Right cardiac atrium (tissue), 5 donors: ENCODE measurements at regions of chr5 and their contacts with region 1.

Region 1: DNA sequence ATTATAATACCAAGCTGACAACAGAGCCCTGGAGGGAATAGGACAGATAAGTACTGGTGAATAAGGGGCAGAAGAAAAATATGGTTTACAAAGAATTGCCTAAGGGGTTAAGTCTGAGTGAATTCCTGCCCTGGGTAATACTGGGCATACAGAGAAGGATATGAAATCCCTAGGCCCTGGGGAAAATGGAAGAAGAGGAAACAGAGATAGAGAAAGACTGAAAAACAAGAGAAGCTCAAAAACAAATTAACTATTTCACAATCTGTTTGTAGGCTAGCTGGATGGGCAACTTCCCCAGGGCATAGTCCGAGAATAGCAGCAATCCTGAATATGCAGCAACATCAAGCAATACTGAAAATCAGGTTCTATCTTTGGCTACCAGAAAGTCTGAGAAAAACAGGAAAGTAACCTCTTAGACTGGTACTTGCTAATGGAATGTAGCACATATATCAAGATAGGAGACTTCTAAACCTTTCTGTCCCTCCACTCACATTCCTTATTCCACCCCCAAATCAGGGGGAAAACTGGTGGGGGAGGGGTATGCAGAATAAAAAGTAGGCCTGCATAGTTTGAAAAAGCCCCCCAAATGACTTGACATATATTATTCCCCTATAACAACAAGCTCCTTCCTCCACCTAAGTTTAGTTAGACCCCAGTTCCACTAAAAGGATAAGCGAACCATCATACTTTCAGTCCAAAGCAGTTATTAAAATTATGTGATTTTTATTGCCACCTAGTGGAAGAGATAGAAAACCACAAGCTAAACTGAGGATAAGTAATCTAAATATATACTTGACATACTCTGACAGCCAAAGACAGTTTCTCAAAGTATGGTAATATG is 20.6 kb downstream of the SLC38A9 start:
- DNase-seq: no peak
- ATAC-seq: peak; percentile 70 to 81
- H3K4me3 ChIP-seq: peak overlapping the region; percentile 45
- H3K27ac ChIP-seq: no peak overlapping the region
- H3K4me1 ChIP-seq: peaks cover 2% of the 10 kb centered on the region
- H3K27me3 ChIP-seq: no peaks in the 10 kb centered on the region

Region 2: DNA sequence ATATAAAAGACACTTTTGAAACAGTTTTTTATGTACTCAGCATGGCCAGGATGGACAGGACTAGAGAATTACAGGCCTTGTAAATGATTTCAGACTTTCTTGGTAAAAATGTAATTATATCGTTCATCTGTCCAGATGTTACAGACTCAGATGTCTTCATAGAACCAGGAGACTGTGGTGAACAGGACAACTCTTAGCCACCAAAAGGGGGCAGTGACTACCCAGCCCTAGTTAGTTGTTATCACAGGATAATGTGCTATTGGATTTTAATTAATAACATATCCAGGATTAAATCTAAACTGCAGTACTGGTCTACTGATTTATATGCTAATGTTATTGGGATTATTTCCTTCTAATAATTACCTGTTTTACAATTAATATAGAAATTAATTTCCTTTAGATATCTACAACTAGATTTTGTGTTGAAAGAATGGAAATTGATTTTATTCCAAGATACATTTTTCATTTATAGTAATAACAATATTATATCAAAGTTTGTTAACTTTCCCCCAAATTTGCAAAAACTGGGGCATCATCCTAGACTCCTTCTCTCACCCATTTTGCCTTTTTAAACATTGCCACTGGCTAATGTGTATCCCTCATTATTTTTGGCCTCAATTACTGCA is 284.3 kb before region 1 on chr5:
- intact Hi-C with region 1: loop called (anchors 5 kb)
- DNase-seq: no peak
- ATAC-seq: peak; percentile 80 to 82
- H3K4me3 ChIP-seq: no peak overlapping the region
- H3K27ac ChIP-seq: no peak overlapping the region
- H3K4me1 ChIP-seq: peaks cover 2% of the 10 kb centered on the region
- H3K27me3 ChIP-seq: no peaks in the 10 kb centered on the region

Region 3: DNA sequence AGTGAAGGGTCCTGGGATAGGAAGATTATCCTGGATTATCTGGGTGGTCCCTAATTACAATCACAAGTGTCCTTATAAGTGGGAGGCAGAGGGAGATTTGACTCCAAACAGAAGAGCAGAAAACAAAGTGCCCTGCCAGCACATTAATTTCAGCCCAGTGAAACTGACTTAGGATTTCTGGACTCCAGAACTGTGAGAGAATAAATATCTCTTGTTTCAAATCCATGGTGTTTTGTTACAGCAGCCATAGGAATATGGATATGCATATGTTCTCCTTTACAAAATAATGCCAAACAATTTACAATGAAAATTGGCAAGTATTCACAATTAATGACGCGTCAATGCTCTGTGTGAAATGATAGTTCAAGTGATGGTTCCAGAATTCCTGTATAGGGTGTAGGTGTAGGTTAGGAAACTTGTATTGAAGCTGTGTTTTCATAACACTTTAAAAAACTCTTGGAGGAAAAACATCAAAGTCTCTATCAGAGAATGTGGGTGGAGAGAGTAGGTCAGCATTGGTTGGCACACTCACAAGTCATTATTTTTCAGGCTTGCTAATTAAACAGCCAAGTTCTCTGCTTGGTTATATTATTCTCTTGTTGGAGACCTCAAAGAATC is 136.8 kb before region 1 on chr5:
- intact Hi-C with region 1: no loop called
- DNase-seq: no peak
- ATAC-seq: peak in 1 of 2 donors; percentile 55
- H3K4me3 ChIP-seq: no peak overlapping the region
- H3K27ac ChIP-seq: no peak overlapping the region
- H3K4me1 ChIP-seq: no peaks in the 10 kb centered on the region
- H3K27me3 ChIP-seq: no peaks in the 10 kb centered on the region

Region 4: GRCh38 chr5:55758231-55758630 is 66.7 kb after region 1 on chr5:
- intact Hi-C with region 1: no loop called
- DNase-seq: no peak
- ATAC-seq: no peak
- H3K4me3 ChIP-seq: no peak overlapping the region
- H3K27ac ChIP-seq: no peak overlapping the region
- H3K4me1 ChIP-seq: no peaks in the 10 kb centered on the region
- H3K27me3 ChIP-seq: no peaks in the 10 kb centered on the region